ENCODE measurements at regions of chr14 and their contacts with region 1.

Region 1: DNA sequence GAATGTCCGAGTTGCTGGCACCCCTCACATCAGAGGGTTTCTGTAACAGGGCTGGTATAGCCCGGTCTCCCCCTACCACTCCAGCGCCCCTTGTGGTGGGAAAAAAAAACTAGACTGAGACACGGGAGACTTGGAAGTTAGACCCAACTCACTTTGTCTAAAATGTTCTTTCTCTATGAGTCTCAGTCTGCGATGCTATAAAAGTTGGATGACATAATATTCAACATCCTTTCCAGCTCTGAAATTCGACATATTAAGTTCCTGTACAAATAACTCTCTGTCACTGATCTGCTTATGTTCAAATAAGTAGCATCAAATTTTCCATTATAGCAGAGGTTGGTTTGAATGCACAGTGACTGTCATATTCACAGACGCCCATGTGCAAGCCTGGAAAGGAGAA is 25.7 kb upstream of the TC2N start:
- DNase-seq: peak; percentile 48
- H3K4me3 ChIP-seq: no peak overlapping the region
- H3K27ac ChIP-seq: no peak overlapping the region
- H3K4me1 ChIP-seq: no peaks in the 10 kb centered on the region
- CTCF ChIP-seq: peak; percentile 91

Region 2: GRCh38 chr14:91649930-91650329 is 243.1 kb before region 1 on chr14:
- CTCF ChIA-PET with region 1: no interaction called
- POLR2A ChIA-PET with region 1: no interaction called
- intact Hi-C with region 1: loop called (anchors 10 kb)
- DNase-seq: peak; percentile 37
- H3K4me3 ChIP-seq: no peak overlapping the region
- H3K27ac ChIP-seq: no peak overlapping the region
- H3K4me1 ChIP-seq: no peaks in the 10 kb centered on the region
- CTCF ChIP-seq: peak; percentile 71

Region 3: DNA sequence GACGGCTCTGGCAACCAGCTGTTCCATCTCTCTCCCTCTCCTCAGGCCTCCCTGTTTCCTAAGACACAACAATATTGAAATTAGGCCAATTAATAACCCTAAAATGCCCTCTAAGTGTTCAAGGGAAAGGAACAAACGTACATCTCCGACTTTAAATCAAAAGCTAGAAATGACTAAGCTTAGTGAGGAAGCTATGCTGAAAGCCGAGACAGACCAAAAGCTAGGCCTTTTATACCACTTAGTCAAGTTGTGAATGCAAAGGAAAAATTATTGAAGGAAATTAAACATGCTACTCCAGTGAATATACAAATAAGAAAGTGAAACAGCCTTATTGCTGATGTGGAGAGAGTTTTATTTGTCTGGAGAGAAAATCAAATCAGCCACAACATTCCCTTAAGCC is 99.3 kb before region 1 on chr14:
- CTCF ChIA-PET with region 1: no interaction called
- POLR2A ChIA-PET with region 1: no interaction called
- intact Hi-C with region 1: no loop called
- DNase-seq: no peak
- H3K4me3 ChIP-seq: no peak overlapping the region
- H3K27ac ChIP-seq: no peak overlapping the region
- H3K4me1 ChIP-seq: no peaks in the 10 kb centered on the region
- CTCF ChIP-seq: no peak